PC-9 (cell line): ENCODE measurements at regions of chr1 and their contacts with region 1.

Region 1: DNA sequence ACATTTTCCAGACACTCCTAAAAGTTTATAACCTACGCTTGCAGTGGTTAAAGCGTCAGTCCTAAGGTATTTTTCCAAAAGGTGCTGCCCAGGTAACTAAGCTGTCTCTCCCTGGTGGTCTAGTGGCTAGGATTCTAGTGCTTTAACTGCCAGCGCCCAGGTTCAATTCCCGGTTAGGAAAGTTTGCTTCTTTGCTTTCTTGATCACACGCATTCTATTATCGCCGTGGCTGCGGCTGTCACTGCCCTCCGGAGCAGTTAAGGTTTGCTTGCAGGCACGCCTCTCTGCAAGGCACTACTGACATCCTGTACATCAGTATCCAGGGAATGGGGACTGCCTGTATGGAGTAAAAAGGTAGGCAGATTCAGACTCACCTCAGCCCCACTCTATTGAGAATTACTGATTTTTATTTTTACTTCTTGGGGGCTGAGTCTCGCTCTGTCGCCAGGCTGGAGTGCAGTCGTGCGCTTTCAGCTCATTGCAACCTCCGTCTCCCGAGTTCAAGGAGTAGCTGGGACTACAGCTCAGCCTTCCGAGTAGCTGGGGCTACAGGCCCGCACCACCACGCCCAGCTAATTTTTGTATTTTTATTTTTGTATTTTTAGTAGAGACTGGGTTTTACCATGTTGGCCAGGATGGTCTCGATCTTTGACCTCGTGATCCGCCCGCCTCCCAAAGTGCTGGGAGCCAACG is 53.2 kb upstream of the CFAP126 start:
- DNase-seq: no peak
- H3K4me3 ChIP-seq: no peak overlapping the region; the same call in 1 of the 2 replicates
- H3K27ac ChIP-seq: no peak overlapping the region
- H3K4me1 ChIP-seq: no peaks in the 10 kb centered on the region; the same call in 1 of the 2 replicates
- H3K27me3 ChIP-seq: no peaks in the 10 kb centered on the region
- CTCF ChIP-seq: no peak

Region 2: DNA sequence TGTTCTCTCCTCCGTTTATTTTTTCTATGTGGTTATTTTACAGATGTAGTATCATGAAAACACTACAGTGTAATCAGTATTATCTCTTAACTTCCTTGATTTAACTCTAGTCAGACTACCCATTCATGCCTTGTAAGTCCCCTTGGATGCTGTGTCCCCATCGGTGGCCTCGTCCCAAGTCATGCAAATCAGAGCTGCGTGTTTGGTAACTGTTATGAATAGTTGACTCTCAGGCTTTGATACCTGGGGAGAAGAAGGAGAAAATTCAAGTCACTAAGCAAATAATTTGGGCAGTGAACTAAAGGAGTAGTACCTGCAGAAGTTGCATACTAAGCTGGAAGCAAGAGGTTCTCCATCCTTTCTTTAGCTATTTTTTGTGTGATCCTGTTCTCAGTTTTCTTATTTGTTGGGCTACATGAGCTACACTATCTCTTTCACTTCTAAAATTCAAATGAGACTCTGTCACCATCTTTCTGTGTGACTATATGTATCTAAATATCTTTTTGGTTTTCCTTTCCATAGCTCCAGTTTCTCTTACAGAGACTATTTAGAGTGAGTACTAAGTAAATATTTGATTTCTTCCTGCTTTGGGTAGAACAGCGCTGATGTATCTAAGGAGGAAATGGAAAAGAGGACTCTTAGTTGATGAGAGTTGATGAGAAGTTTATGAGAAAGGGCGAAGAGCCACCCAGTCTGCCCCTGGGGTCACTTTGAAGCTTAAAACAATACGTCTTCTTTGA is 969.6 kb before region 1 on chr1:
- CTCF ChIA-PET with region 1: no interaction called
- POLR2A ChIA-PET with region 1: interaction called, 11 read pairs
- intact Hi-C with region 1: no loop called
- DNase-seq: no peak
- H3K4me3 ChIP-seq: no peak overlapping the region
- H3K27ac ChIP-seq: no peak overlapping the region
- H3K4me1 ChIP-seq: no peaks in the 10 kb centered on the region
- H3K27me3 ChIP-seq: peaks cover 55% of the 10 kb centered on the region
- CTCF ChIP-seq: no peak

Region 3: GRCh38 chr1:161209790-161210409 is 211.0 kb before region 1 on chr1:
- CTCF ChIA-PET with region 1: no interaction called
- POLR2A ChIA-PET with region 1: no interaction called
- intact Hi-C with region 1: no loop called
- DNase-seq: peak; percentile 43 to 79
- H3K4me3 ChIP-seq: no peak overlapping the region
- H3K27ac ChIP-seq: no peak overlapping the region
- H3K4me1 ChIP-seq: no peaks in the 10 kb centered on the region
- H3K27me3 ChIP-seq: no peaks in the 10 kb centered on the region
- CTCF ChIP-seq: peak; percentile 94

Region 4: GRCh38 chr1:161399257-161399998 is 21.5 kb before region 1 on chr1:
- CTCF ChIA-PET with region 1: interaction called, 3 read pairs
- POLR2A ChIA-PET with region 1: no interaction called
- intact Hi-C with region 1: loop called (anchors 2 kb)
- DNase-seq: peak; percentile 83 to 84
- H3K4me3 ChIP-seq: peak overlapping the region; percentile 67
- H3K27ac ChIP-seq: peak overlapping the region; percentile 99
- H3K4me1 ChIP-seq: peaks cover 44% of the 10 kb centered on the region
- H3K27me3 ChIP-seq: no peaks in the 10 kb centered on the region
- CTCF ChIP-seq: peak; percentile 59